K562 (cell line): ENCODE measurements at regions of chrX and their contacts with region 1.

Region 1: DNA sequence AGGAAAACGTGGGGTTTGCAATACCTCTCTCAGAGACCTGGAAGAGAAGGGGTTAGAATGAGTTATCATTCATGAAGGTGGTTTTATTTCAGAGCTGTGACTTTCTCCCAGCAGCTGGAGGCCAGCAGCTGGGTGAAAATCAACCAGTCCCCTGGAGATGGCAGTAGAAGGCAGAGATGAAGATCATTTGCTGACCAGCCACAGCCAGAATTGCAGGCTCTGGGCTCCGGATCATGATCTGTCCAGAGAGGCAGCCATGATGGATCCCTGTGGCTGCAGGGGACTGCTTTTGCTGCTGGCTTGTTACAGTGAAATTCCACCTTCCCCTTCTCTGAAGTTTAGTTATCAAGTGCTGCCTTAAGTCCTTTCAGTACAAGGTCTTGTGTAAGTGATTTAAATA is 46.9 kb upstream of the TAB3 start:
- DNase-seq: peak; percentile 14 to 51 (median 30)
- ATAC-seq: peak; percentile 95
- H3K4me3 ChIP-seq: no peak overlapping the region
- H3K27ac ChIP-seq: no peak overlapping the region
- H3K4me1 ChIP-seq: no peaks in the 10 kb centered on the region
- H3K27me3 ChIP-seq: no peaks in the 10 kb centered on the region; a peak in 1 of 5 replicates
- CTCF ChIP-seq: peak; percentile 43 to 54 (median 43); a peak in 5 of 6 replicates
- EP300 ChIP-seq: no peak
- POLR2A ChIP-seq: no peak
- RAD21 ChIP-seq: peak; percentile 23 to 59; a peak in 2 of 4 replicates

Region 2: GRCh38 chrX:29666366-29666765 is 1269.6 kb before region 1 on chrX:
- CTCF ChIA-PET with region 1: no interaction called
- POLR2A ChIA-PET with region 1: no interaction called
- in situ Hi-C with region 1: no loop called
- intact Hi-C with region 1: no loop called
- DNase-seq: no peak
- ATAC-seq: no peak
- H3K4me3 ChIP-seq: no peak overlapping the region
- H3K27ac ChIP-seq: no peak overlapping the region
- H3K4me1 ChIP-seq: no peaks in the 10 kb centered on the region
- H3K27me3 ChIP-seq: no peaks in the 10 kb centered on the region
- CTCF ChIP-seq: no peak
- EP300 ChIP-seq: no peak
- POLR2A ChIP-seq: no peak
- RAD21 ChIP-seq: no peak

Region 3: DNA sequence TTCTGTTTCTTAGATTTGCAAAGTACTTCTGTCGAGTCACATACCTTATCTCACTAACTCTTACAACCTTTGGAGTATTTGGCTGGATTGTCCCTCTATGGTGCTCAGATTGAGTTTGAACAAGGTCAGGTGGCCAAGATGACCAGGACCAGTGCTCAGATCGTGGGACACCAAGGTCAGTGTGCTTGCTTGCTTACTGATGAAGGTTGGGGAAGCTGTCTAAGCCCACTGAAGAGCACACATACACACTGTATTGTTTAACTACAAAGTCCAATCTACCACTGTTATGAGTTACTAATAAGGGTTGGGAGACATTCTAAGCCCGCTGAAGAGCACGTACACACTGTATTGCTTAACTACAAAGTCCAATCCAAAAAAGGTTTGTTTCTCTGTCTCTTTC is 100.6 kb before region 1 on chrX:
- CTCF ChIA-PET with region 1: no interaction called
- POLR2A ChIA-PET with region 1: no interaction called
- in situ Hi-C with region 1: loop called (anchors 5 kb)
- intact Hi-C with region 1: no loop called
- DNase-seq: no peak
- ATAC-seq: no peak
- H3K4me3 ChIP-seq: no peak overlapping the region
- H3K27ac ChIP-seq: no peak overlapping the region
- H3K4me1 ChIP-seq: no peaks in the 10 kb centered on the region
- H3K27me3 ChIP-seq: no peaks in the 10 kb centered on the region
- CTCF ChIP-seq: no peak
- EP300 ChIP-seq: no peak
- POLR2A ChIP-seq: no peak
- RAD21 ChIP-seq: no peak

Region 4: GRCh38 chrX:30971774-30972603 is 36.0 kb after region 1 on chrX:
- CTCF ChIA-PET with region 1: no interaction called
- POLR2A ChIA-PET with region 1: no interaction called
- in situ Hi-C with region 1: no loop called
- intact Hi-C with region 1: loop called (anchors 5 kb)
- DNase-seq: peak; percentile 14 to 51 (median 28)
- ATAC-seq: peak; percentile 97
- H3K4me3 ChIP-seq: no peak overlapping the region
- H3K27ac ChIP-seq: no peak overlapping the region
- H3K4me1 ChIP-seq: peaks cover 0 to 9% of the 10 kb centered on the region in 2 experiments; a peak in 2 of 5 replicates
- H3K27me3 ChIP-seq: 0 out of 5 replicates have a peak, but pooled peaks cover 0 to 4% of the 10 kb centered on the region in 2 experiments
- CTCF ChIP-seq: peak; percentile 69 to 83 (median 73)
- EP300 ChIP-seq: no peak
- POLR2A ChIP-seq: no peak
- RAD21 ChIP-seq: peak in 1 of 2 experiments; percentile 57; a peak in 3 of 4 replicates